Mammary epithelial cell (primary cell): ENCODE measurements at regions of chr14 and their contacts with region 1.

Region 1: GRCh38 chr14:65164068-65164824 is 61.9 kb upstream of the MAX start:
- DNase-seq: no peak
- H3K4me3 ChIP-seq: no peak overlapping the region
- H3K27ac ChIP-seq: no peak overlapping the region
- H3K4me1 ChIP-seq: peaks cover 3% of the 10 kb centered on the region
- H3K27me3 ChIP-seq: no peaks in the 10 kb centered on the region
- CTCF ChIP-seq: peak; percentile 46 to 61

Region 2: DNA sequence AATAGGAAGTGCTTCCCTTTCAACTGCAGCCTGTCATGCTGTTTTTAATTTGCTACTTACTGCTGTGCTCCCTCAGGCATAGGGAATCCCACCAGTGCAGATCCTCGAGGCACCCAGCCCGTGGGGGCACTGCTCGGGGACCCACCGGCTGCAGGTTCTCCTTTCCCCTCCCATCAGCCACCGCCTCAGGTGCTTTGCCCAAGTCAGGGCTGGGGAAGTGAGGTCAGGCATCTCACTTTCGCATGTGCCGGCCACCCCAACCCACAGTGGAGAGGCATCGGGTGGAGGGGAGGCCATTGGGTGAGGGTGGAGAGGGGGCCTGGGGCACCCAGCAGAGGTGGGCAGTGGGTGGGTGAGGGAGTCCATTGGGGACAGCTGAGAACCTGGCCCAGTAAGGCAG is 20.1 kb before region 1 on chr14:
- CTCF ChIA-PET with region 1: interaction called, 23 read pairs
- dilution Hi-C with region 1: no loop called
- in situ Hi-C with region 1: no loop called
- intact Hi-C with region 1: no loop called
- DNase-seq: no peak
- H3K4me3 ChIP-seq: no peak overlapping the region
- H3K27ac ChIP-seq: no peak overlapping the region
- H3K4me1 ChIP-seq: no peaks in the 10 kb centered on the region
- H3K27me3 ChIP-seq: no peaks in the 10 kb centered on the region
- CTCF ChIP-seq: no peak

Region 3: DNA sequence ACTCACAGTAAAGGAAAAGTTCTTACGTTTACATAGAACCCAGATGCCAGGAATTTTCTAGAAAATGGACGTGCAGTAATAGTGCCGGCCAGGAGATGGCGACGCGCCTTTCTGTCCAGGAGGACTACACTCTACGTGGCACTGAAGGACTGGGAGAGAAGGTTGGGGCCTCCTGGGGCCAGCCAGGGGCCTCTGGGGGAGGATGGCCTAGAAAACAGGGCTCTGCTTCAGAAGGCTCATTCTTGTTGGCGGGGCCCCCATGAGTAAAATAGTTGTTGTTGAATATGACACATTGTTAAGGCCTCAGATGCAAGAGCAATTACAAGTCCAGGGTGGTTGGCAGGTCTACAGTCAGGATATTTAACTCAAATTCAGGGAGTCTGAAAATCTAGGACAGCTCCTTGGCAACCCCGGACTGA is 58.2 kb after region 1 on chr14:
- CTCF ChIA-PET with region 1: interaction called, 3 read pairs
- dilution Hi-C with region 1: loop called (anchors 5 kb)
- in situ Hi-C with region 1: no loop called
- intact Hi-C with region 1: loop called (anchors 2 kb)
- DNase-seq: peak; percentile 46
- H3K4me3 ChIP-seq: no peak overlapping the region
- H3K27ac ChIP-seq: no peak overlapping the region
- H3K4me1 ChIP-seq: peaks cover 11% of the 10 kb centered on the region
- H3K27me3 ChIP-seq: no peaks in the 10 kb centered on the region
- CTCF ChIP-seq: peak; percentile 90 to 92

Region 4: GRCh38 chr14:65412032-65412846 is 248.0 kb after region 1 on chr14 and contains the start of gene FUT8:
- CTCF ChIA-PET with region 1: interaction called, 16 read pairs
- dilution Hi-C with region 1: no loop called
- in situ Hi-C with region 1: loop called in 1 of 2 experiments (anchors 5 kb)
- intact Hi-C with region 1: loop called (anchors 1 kb)
- DNase-seq: peak; percentile 96
- H3K4me3 ChIP-seq: peak within 1 kb of the TSS; percentile 69 to 98 (median 97)
- H3K27ac ChIP-seq: peak within 1 kb of the TSS; percentile 81
- H3K4me1 ChIP-seq: peaks cover 16% of the 10 kb centered on the region
- H3K27me3 ChIP-seq: no peaks in the 10 kb centered on the region
- CTCF ChIP-seq: peak; percentile 46 to 88
- total RNA-seq, gene FUT8: 14.4 to 22.0 TPM

Region 5: GRCh38 chr14:65824285-65824977 is 660.2 kb after region 1 on chr14:
- CTCF ChIA-PET with region 1: interaction called, 6 read pairs
- dilution Hi-C with region 1: loop called (anchors 5 kb)
- in situ Hi-C with region 1: loop called (anchors 10 to 25 kb)
- intact Hi-C with region 1: loop called (anchors 1 kb)
- DNase-seq: peak; percentile 42
- H3K4me3 ChIP-seq: no peak overlapping the region
- H3K27ac ChIP-seq: no peak overlapping the region
- H3K4me1 ChIP-seq: no peaks in the 10 kb centered on the region
- H3K27me3 ChIP-seq: peaks cover 7% of the 10 kb centered on the region
- CTCF ChIP-seq: peak; percentile 91 to 98

Region 6: GRCh38 chr14:65958664-65959562 is 794.7 kb after region 1 on chr14:
- CTCF ChIA-PET with region 1: no interaction called
- dilution Hi-C with region 1: no loop called
- in situ Hi-C with region 1: loop called (anchors 25 kb)
- intact Hi-C with region 1: loop called (anchors 1 kb)
- DNase-seq: no peak
- H3K4me3 ChIP-seq: no peak overlapping the region
- H3K27ac ChIP-seq: no peak overlapping the region
- H3K4me1 ChIP-seq: no peaks in the 10 kb centered on the region
- H3K27me3 ChIP-seq: no peaks in the 10 kb centered on the region
- CTCF ChIP-seq: peak; percentile 27 to 54